ENCODE measurements at regions of chr20 and their contacts with region 1.

Region 1: DNA sequence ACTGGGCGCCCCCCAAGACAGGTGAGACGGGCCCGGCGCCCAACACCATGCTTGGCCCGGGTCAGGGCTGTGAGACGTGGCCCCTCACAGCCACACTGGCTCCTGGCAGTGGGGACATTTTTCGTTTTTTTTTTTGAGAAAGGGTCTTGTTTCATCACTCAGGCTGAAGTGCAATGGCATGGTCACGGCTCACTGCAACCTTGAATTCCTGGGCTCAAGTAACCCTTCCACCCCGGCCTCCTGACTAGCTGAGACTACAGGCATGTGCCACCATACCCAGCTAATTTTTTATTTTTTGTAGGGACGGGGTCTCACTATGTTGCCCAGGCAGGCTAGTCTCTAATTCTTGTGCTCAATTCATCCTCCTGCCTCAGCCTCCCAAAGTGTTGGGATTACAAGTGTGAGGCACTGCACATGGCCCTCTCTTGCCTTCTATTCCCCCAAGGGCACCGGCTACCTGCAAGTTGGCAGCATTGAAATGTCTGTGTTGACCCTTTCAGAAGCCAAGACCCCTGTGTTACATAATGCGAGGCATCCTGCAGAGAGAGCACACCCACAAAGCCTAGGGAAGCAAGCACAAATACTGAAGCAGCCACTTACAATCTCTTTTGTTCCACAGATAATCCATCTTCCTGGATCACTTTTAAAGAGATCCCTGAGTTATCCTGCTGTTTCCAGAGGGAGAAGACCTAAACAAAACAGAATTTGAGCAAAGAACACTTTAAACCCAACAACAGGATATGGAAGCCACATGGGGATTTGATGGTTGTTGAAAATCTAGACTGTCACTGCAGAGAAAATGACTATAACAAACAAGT is 57.5 kb upstream of the SLC4A11 start:
- DNase-seq: no peak
- ATAC-seq: peak in 3 of 4 donors; percentile 19 to 42 (median 34)
- H3K4me3 ChIP-seq: no peak overlapping the region
- H3K27ac ChIP-seq: peak overlapping the region in 9 of 12 donors; percentile 9 to 76 (median 46)
- H3K4me1 ChIP-seq: peaks cover 0 to 15% (median 0%) of the 10 kb centered on the region in 12 donors
- H3K27me3 ChIP-seq: no peaks in the 10 kb centered on the region
- CTCF ChIP-seq: no peak
- POLR2A ChIP-seq: no peak

Region 2: GRCh38 chr20:2865630-2866029 is 430.8 kb before region 1 on chr20:
- intact Hi-C with region 1: loop called in 1 of 10 experiments (anchors 10 kb)
- DNase-seq: no peak
- ATAC-seq: no peak
- H3K4me3 ChIP-seq: no peak overlapping the region
- H3K27ac ChIP-seq: no peak overlapping the region
- H3K4me1 ChIP-seq: peaks cover 0 to 18% (median 0%) of the 10 kb centered on the region in 12 donors
- H3K27me3 ChIP-seq: no peaks in the 10 kb centered on the region
- CTCF ChIP-seq: no peak
- POLR2A ChIP-seq: no peak

Region 3: DNA sequence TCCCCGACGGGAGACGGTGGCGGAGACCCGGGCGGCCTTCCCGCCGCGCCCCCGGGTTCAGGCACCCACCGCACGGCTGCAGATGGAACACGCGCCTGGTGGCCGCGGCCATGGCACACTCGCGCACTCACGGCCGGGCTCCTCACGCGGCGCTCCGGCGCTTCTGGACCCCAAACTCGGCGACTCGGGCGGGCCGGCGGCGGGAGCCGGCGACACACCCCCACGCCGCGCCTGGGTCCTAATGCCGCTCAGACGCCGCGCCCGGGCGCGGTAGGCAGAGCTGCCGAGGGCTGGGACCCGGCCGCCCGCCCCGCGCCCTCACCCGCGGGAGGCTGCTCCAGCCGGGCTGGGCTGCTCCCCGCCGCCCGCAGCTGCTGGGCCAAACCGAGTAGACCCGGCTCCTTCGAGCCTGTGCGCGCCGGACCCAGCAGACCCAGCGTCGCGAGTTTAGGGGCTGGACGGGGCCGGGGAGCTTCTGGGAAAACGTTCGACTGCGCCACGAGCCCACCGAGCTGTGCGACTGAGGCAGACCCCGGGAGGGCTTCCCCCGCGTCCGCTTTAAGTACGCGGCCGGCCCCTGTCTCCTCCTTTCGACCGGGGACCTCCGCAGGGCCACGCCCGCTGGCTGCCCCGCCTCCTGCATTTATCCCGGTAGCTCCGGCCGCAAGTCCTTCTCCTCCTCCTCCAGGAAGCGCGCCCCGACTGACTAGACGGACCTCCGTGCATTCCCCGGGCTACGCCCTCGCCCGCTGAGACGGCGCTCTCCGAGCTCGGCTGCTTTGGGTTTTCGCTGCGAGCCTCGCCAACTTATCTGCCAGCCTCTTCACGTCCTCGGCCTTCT is 57.2 kb before region 1 on chr20 and contains the start of gene SLC4A11:
- intact Hi-C with region 1: no loop called
- DNase-seq: peak; percentile 59 to 81 (median 63)
- ATAC-seq: peak in 3 of 4 donors; percentile 64 to 78 (median 66)
- H3K4me3 ChIP-seq: peak within 1 kb of the TSS; percentile 50 to 86 (median 66)
- H3K27ac ChIP-seq: peak within 1 kb of the TSS in 4 of 12 donors; percentile 8 to 38 (median 22)
- H3K4me1 ChIP-seq: peaks cover 0 to 29% (median 17%) of the 10 kb centered on the region in 12 donors
- H3K27me3 ChIP-seq: peaks cover 5 to 54% (median 38%) of the 10 kb centered on the region in 9 donors
- CTCF ChIP-seq: no peak
- POLR2A ChIP-seq: no peak
- total RNA-seq, gene SLC4A11: 0.11 to 1.0 (median 0.22) TPM in 8 of 9 donors, not detected in the other

Measured in heart left ventricle (tissue), 16 donors.